ENCODE measurements at regions of chr3 and their contacts with region 1.

Region 1: DNA sequence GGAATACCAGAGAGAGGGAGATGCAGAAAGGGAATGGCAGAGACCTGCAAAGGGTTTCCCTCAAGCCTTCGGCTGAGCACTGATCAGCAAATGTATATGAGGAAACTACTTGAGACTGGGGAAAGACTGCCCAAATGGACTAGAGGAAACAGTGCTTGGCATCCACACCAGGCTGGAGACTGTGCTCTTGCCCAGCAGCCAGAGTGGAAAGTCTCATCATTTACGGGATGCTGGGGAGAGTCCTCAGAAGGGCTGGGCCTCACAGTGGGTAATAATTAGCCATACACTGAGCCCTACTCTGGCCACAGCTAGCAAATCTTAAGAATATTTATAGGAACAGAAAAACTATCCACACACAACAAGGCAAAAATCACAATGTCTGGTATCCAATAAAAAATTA is 18.5 kb downstream of the RAB6B start:
- DNase-seq: no peak
- ATAC-seq: no peak
- H3K4me3 ChIP-seq: no peak overlapping the region
- H3K4me3 Mint-ChIP-seq: no peak overlapping the region
- H3K27ac ChIP-seq: no peak overlapping the region
- H3K27ac Mint-ChIP-seq: no peak overlapping the region
- H3K4me1 ChIP-seq: peaks cover 3% of the 10 kb centered on the region
- H3K4me1 Mint-ChIP-seq: peaks cover 9% of the 10 kb centered on the region
- H3K27me3 ChIP-seq: no peaks in the 10 kb centered on the region
- H3K27me3 Mint-ChIP-seq: peaks cover 7% of the 10 kb centered on the region
- CTCF ChIP-seq: no peak

Region 2: GRCh38 chr3:133843634-133844033 is 33.6 kb before region 1 on chr3:
- CTCF ChIA-PET with region 1: no interaction called
- POLR2A ChIA-PET with region 1: no interaction called
- intact Hi-C with region 1: loop called in 1 of 2 experiments (anchors 2 kb)
- DNase-seq: no peak
- ATAC-seq: no peak
- H3K4me3 ChIP-seq: no peak overlapping the region
- H3K4me3 Mint-ChIP-seq: no peak overlapping the region
- H3K27ac ChIP-seq: no peak overlapping the region
- H3K27ac Mint-ChIP-seq: no peak overlapping the region
- H3K4me1 ChIP-seq: no peaks in the 10 kb centered on the region
- H3K4me1 Mint-ChIP-seq: no peaks in the 10 kb centered on the region
- H3K27me3 ChIP-seq: no peaks in the 10 kb centered on the region
- H3K27me3 Mint-ChIP-seq: no peaks in the 10 kb centered on the region
- CTCF ChIP-seq: no peak

Region 3: GRCh38 chr3:133895208-133896001 is 18.2 kb after region 1 on chr3 and contains the start of gene RAB6B:
- CTCF ChIA-PET with region 1: no interaction called
- POLR2A ChIA-PET with region 1: no interaction called
- intact Hi-C with region 1: no loop called
- DNase-seq: peak in 2 of 9 experiments; percentile 16 to 52
- ATAC-seq: peak; percentile 57
- H3K4me3 ChIP-seq: no peak within 1 kb of the TSS
- H3K4me3 Mint-ChIP-seq: peak within 1 kb of the TSS; percentile 58
- H3K27ac ChIP-seq: no peak within 1 kb of the TSS
- H3K27ac Mint-ChIP-seq: no peak within 1 kb of the TSS
- H3K4me1 ChIP-seq: no peaks in the 10 kb centered on the region
- H3K4me1 Mint-ChIP-seq: peaks cover 10% of the 10 kb centered on the region
- H3K27me3 ChIP-seq: no peaks in the 10 kb centered on the region
- H3K27me3 Mint-ChIP-seq: peaks cover 41% of the 10 kb centered on the region
- CTCF ChIP-seq: no peak
- total RNA-seq, gene RAB6B: 1.1 to 1.3 TPM

Region 4: DNA sequence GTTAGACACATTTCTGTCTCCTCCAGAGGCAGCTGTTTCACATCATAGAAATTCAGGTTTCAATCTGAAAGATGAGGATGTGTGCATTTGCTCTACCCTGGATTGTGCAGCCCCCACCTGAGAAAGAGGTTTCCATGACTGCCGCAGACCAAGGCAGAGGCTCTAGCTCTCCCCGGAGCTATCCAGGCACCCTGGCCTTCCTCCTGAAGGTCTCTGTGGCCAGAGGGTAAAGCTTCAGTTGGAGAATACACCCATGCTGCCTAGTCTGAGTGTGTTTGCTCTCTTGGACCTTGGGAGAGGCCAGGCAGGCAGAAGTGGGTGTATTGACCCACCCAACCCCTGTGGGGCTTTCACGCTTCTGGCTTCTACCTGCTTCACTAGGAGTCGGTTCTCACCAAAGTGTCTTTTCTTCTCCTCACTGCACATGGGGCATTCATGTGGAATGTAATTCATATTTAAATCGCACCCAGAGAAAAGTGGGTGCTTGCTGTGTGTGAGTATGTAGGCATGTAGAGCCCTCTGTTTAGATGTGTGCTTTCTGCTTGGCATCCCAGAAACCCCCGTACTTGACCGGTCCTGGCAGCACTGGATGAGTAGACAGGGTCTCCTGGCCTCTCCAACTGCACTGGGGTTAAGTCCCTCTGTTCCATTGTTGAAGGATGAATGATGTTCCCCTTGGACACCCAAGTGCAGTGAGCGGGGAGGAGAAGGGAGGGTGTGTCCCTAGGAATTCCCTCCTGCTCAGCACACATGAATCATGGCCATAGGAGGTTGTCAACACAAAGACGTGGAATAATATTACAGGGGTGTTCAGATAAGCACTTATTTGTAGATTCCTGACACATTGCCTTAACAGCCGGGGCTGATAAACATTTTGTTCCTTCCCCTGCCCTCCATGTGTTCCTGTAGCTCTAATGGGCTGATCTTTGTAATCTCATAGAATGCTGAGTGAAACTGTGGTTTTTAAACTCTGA is 38.8 kb after region 1 on chr3:
- CTCF ChIA-PET with region 1: no interaction called
- POLR2A ChIA-PET with region 1: no interaction called
- intact Hi-C with region 1: loop called in 1 of 2 experiments (anchors 2 kb)
- DNase-seq: no peak
- ATAC-seq: no peak
- H3K4me3 ChIP-seq: no peak overlapping the region
- H3K4me3 Mint-ChIP-seq: no peak overlapping the region
- H3K27ac ChIP-seq: no peak overlapping the region
- H3K27ac Mint-ChIP-seq: no peak overlapping the region
- H3K4me1 ChIP-seq: no peaks in the 10 kb centered on the region
- H3K4me1 Mint-ChIP-seq: no peaks in the 10 kb centered on the region
- H3K27me3 ChIP-seq: peaks cover 0 to 7% of the 10 kb centered on the region in 2 experiments
- H3K27me3 Mint-ChIP-seq: peaks cover 26% of the 10 kb centered on the region
- CTCF ChIP-seq: no peak

Measured in CD8-positive, alpha-beta T cell (primary cell).